H1 (cell line): ENCODE measurements at regions of chr12 and their contacts with region 1.

Region 1: DNA sequence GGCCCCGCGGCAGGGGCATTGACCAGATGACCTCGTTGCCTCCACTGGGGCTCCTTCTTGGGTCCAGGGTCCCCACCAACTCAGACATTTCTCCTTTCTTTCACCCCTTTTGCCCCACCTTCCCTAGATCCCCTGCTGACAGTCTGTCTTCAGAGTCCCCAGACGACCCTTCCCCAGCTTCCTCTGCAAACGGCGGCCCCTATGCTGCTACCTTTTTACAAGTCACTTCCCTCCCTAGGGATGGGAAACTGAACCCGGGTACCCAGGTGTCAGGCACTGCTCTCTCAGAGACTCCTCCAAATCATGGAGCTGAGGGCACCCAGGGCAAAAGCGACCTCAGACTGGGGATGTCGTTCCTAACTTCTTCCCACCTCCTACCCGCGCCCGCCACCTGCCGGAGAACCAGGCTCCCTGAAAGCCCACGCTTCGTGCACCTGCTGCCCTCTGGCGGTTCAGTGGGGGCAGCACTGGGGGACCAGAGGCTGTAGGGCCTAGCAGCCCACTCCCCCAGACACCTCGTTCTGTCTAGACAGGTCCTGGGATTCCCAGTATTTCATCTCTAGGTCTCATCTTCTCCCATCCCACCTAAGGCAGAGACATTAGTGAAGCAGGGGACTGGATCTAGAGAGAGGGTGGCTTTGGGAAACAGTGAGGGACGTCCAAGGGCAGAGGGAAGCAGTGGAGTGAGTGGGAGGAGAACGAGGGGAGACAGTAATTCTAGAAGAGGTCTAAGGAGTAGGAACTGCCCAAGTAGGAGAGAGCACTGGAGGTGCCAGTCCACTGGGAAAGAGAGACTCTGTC is 4.9 kb downstream of the ZNF385A start:
- DNase-seq: peak in 1 of 2 experiments; percentile 99
- H3K4me3 ChIP-seq: peak overlapping the region; percentile 30 to 54 (median 38); a peak in 6 of 8 replicates
- H3K27ac ChIP-seq: no peak overlapping the region
- H3K4me1 ChIP-seq: peaks cover 3 to 17% (median 12%) of the 10 kb centered on the region in 4 experiments
- H3K27me3 ChIP-seq: peaks cover 0 to 3% (median 1%) of the 10 kb centered on the region in 4 experiments; a peak in 2 of 7 replicates
- CTCF ChIP-seq: peak; percentile 100
- EP300 ChIP-seq: no peak
- POLR2A ChIP-seq: no peak
- RAD21 ChIP-seq: peak; percentile 84 to 90

Region 2: DNA sequence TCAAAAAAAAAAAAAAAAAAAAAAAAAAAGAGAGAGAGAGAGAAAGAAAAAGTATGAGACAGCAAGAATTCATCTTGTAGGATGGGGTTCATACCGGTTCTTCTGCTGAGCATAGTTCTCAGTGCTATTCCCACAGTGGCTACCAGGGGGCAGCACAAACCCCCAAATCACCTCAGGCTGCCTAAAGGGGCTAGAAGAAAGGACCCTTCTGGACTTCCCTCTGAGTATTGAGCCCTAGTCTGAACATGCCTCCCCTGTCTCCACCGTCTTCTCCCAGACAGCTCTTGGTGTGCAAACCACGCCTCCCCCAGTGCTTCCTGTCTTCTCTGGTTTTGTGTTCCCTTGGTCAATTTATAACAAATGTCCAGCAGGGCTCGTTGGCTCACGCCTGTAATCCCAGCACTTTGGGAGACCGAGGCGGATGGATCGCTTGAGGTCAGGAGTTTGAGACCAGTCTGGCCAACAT is 159.5 kb before region 1 on chr12:
- CTCF ChIA-PET with region 1: interaction called, 15 read pairs
- POLR2A ChIA-PET with region 1: interaction called, 7 read pairs
- DNase-seq: peak in 1 of 2 experiments; percentile 94
- H3K4me3 ChIP-seq: no peak overlapping the region
- H3K27ac ChIP-seq: no peak overlapping the region
- H3K4me1 ChIP-seq: peaks cover 0 to 20% (median 15%) of the 10 kb centered on the region in 4 experiments; a peak in 6 of 7 replicates
- H3K27me3 ChIP-seq: peaks cover 1 to 36% (median 25%) of the 10 kb centered on the region in 4 experiments; a peak in 6 of 7 replicates
- CTCF ChIP-seq: peak; percentile 73 to 90 (median 84)
- EP300 ChIP-seq: no peak
- POLR2A ChIP-seq: no peak
- RAD21 ChIP-seq: peak; percentile 78 to 84

Region 3: GRCh38 chr12:54285150-54286041 is 94.2 kb before region 1 on chr12:
- CTCF ChIA-PET with region 1: interaction called, 51 read pairs
- POLR2A ChIA-PET with region 1: interaction called, 14 read pairs
- DNase-seq: no peak
- H3K4me3 ChIP-seq: peak overlapping the region in 1 of 4 experiments; percentile 33; a peak in 2 of 8 replicates
- H3K27ac ChIP-seq: no peak overlapping the region
- H3K4me1 ChIP-seq: peaks cover 0 to 7% (median 3%) of the 10 kb centered on the region in 4 experiments; a peak in 5 of 7 replicates
- H3K27me3 ChIP-seq: no peaks in the 10 kb centered on the region
- CTCF ChIP-seq: no peak
- EP300 ChIP-seq: no peak
- POLR2A ChIP-seq: no peak; a peak in 1 of 3 replicates
- RAD21 ChIP-seq: no peak

Region 4: DNA sequence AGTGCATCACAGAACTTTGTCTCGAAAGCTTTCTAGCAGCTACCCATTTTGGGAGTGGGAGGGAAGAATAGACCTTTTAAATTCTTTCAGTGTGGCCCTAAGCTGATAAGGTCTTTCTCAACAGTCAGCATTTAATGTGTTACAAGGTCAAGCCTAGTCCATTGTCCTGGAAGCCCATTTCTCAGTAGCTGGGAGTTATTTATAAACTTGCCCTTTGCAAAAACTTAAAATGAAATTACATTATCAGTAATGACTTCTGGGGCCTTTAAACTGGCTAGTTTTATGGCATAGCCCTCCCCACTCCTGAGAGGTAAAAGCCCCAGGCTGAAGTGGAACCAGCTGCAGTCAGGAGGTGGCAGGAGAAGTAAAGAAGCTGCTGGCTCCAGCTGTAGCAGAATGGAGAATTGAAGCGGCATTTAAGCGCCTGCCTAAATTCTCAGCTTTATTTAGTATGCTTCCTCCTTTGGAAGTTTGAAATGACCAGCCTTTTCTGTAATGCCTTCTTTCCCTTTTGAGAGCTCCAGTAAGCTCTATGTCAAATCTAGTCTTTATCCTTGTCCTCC is 42.2 kb before region 1 on chr12:
- CTCF ChIA-PET with region 1: interaction called, 20 read pairs
- POLR2A ChIA-PET with region 1: no interaction called
- DNase-seq: no peak
- H3K4me3 ChIP-seq: no peak overlapping the region
- H3K27ac ChIP-seq: no peak overlapping the region
- H3K4me1 ChIP-seq: no peaks in the 10 kb centered on the region
- H3K27me3 ChIP-seq: no peaks in the 10 kb centered on the region
- CTCF ChIP-seq: no peak
- EP300 ChIP-seq: no peak
- POLR2A ChIP-seq: no peak
- RAD21 ChIP-seq: peak in 1 of 2 experiments; percentile 26; a peak in 1 of 4 replicates

Region 5: GRCh38 chr12:54368709-54369583 is 10.7 kb before region 1 on chr12:
- CTCF ChIA-PET with region 1: interaction called, 100 read pairs
- POLR2A ChIA-PET with region 1: interaction called, 11 read pairs
- DNase-seq: peak in 1 of 2 experiments; percentile 90
- H3K4me3 ChIP-seq: peak overlapping the region; percentile 4 to 64 (median 17); a peak in 5 of 8 replicates
- H3K27ac ChIP-seq: no peak overlapping the region
- H3K4me1 ChIP-seq: peaks cover 0 to 11% (median 6%) of the 10 kb centered on the region in 4 experiments; a peak in 5 of 7 replicates
- H3K27me3 ChIP-seq: peaks cover 0 to 16% (median 12%) of the 10 kb centered on the region in 4 experiments; a peak in 6 of 7 replicates
- CTCF ChIP-seq: peak; percentile 90 to 94 (median 94)
- EP300 ChIP-seq: no peak
- POLR2A ChIP-seq: no peak
- RAD21 ChIP-seq: peak; percentile 84 to 88

Region 6: DNA sequence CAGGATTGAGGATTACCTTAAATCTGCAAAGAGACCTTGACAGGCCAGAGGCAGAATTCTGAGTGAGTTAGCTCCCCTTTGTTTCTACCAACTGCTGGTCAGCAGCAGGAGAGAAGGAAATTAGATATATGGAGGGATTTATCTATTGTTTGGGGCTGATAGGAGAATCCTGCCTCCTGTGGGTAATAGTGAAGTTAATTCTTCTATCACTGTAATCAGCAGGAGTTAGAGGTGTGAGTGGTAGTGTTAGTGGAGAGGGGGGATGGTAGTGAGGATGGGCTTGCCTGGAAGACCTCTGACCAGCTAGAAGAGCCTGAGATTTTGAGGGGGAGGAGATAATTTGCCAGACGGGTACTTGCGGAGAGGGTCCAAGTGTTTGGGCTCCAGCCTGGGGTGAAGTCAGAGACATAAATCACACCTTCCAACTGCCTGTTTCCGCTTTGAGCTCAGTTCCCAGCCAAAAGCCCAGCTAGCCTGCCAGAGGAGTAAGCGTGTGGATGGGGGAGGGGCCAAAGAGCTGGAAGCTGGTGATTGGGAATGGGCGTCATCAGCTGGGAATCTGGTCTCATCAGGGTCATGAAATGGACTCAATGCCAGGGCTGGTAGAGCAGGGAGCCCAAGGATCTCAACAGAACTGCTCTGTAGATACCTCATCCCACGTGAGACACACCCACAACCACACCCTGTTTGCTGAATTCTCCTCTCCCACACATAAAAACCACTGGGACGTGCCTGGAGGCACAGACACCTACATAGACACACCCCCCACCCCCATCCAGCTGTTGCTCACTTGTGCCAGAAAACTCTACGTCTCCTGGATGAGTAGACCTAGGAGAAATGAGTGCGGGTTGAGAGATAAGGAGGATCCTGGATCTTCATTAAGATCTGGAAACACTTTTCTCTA is 52.6 kb after region 1 on chr12:
- CTCF ChIA-PET with region 1: interaction called, 32 read pairs
- POLR2A ChIA-PET with region 1: no interaction called
- DNase-seq: no peak
- H3K4me3 ChIP-seq: peak overlapping the region in 2 of 4 experiments; percentile 23 to 26; a peak in 3 of 8 replicates
- H3K27ac ChIP-seq: no peak overlapping the region
- H3K4me1 ChIP-seq: peaks cover 0 to 16% (median 11%) of the 10 kb centered on the region in 4 experiments; a peak in 6 of 7 replicates
- H3K27me3 ChIP-seq: peaks cover 3 to 41% (median 29%) of the 10 kb centered on the region in 4 experiments
- CTCF ChIP-seq: no peak
- EP300 ChIP-seq: no peak
- POLR2A ChIP-seq: no peak
- RAD21 ChIP-seq: no peak

Region 7: DNA sequence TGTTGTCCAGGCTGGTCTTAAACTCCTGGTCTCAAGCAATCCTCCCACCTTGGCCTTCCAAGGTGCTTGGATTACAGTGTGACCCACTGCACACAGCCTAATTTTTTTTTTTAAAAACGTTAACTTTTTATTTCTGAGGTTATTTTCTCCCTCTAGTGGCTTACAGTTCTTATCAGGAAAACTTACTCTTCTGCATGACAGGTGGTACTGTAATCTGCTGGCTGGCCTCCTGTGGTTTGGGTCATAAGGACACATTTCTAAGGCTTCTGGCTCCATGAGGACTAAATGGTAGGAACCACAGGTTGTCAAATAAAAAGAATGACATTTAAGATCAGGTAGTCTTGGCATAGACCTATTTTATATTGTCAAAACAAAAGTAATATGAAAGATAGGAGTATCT is 110.3 kb after region 1 on chr12:
- CTCF ChIA-PET with region 1: no interaction called
- POLR2A ChIA-PET with region 1: no interaction called
- DNase-seq: no peak
- H3K4me3 ChIP-seq: no peak overlapping the region
- H3K27ac ChIP-seq: no peak overlapping the region
- H3K4me1 ChIP-seq: no peaks in the 10 kb centered on the region
- H3K27me3 ChIP-seq: no peaks in the 10 kb centered on the region
- CTCF ChIP-seq: no peak
- EP300 ChIP-seq: no peak
- POLR2A ChIP-seq: no peak
- RAD21 ChIP-seq: no peak

Region 8: GRCh38 chr12:54680374-54680773 is 300.8 kb after region 1 on chr12:
- CTCF ChIA-PET with region 1: no interaction called
- POLR2A ChIA-PET with region 1: no interaction called
- DNase-seq: peak; percentile 25 to 90
- H3K4me3 ChIP-seq: no peak overlapping the region
- H3K27ac ChIP-seq: no peak overlapping the region
- H3K4me1 ChIP-seq: peaks cover 12 to 23% (median 20%) of the 10 kb centered on the region in 4 experiments
- H3K27me3 ChIP-seq: no peaks in the 10 kb centered on the region; a peak in 1 of 7 replicates
- CTCF ChIP-seq: peak; percentile 46 to 92 (median 83)
- EP300 ChIP-seq: no peak
- POLR2A ChIP-seq: no peak
- RAD21 ChIP-seq: peak; percentile 21 to 37; a peak in 3 of 4 replicates